PC-9 (cell line): ENCODE measurements at regions of chr7 and their contacts with region 1.

Region 1: GRCh38 chr7:11127114-11127835 is 153.6 kb downstream of the PHF14 start:
- DNase-seq: no peak
- H3K4me3 ChIP-seq: no peak overlapping the region
- H3K27ac ChIP-seq: no peak overlapping the region
- H3K4me1 ChIP-seq: no peaks in the 10 kb centered on the region
- H3K27me3 ChIP-seq: no peaks in the 10 kb centered on the region
- CTCF ChIP-seq: no peak

Region 2: GRCh38 chr7:10793995-10794775 is 333.1 kb before region 1 on chr7:
- CTCF ChIA-PET with region 1: no interaction called
- POLR2A ChIA-PET with region 1: no interaction called
- intact Hi-C with region 1: no loop called
- DNase-seq: no peak
- H3K4me3 ChIP-seq: no peak overlapping the region
- H3K27ac ChIP-seq: no peak overlapping the region
- H3K4me1 ChIP-seq: no peaks in the 10 kb centered on the region
- H3K27me3 ChIP-seq: no peaks in the 10 kb centered on the region
- CTCF ChIP-seq: no peak

Region 3: DNA sequence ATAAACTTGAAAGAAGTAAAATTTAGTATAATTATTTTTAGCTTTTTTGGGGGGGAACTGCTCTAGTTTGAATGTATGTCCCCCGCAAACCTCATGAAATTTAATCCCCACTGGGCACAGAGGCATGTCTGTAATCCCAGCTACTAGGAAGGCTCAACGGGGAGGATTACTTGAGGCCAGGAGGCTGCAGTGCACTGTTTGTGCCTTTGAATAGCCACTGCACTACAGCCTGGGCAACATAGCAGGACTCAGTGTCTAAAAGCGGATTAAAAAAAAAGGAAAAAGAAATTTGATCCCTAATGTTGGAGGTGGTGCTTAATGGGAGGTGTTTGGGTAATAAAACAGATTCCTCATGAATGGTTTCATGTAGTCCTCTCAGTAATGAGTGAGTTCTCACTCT is 196.7 kb before region 1 on chr7:
- CTCF ChIA-PET with region 1: no interaction called
- POLR2A ChIA-PET with region 1: no interaction called
- intact Hi-C with region 1: no loop called
- DNase-seq: no peak
- H3K4me3 ChIP-seq: no peak overlapping the region
- H3K27ac ChIP-seq: no peak overlapping the region
- H3K4me1 ChIP-seq: no peaks in the 10 kb centered on the region
- H3K27me3 ChIP-seq: no peaks in the 10 kb centered on the region
- CTCF ChIP-seq: no peak

Region 4: GRCh38 chr7:11104578-11104977 is 22.7 kb before region 1 on chr7:
- CTCF ChIA-PET with region 1: no interaction called
- POLR2A ChIA-PET with region 1: interaction called, 11 read pairs
- intact Hi-C with region 1: no loop called
- DNase-seq: no peak
- H3K4me3 ChIP-seq: no peak overlapping the region
- H3K27ac ChIP-seq: no peak overlapping the region
- H3K4me1 ChIP-seq: no peaks in the 10 kb centered on the region
- H3K27me3 ChIP-seq: no peaks in the 10 kb centered on the region
- CTCF ChIP-seq: no peak